ENCODE measurements at regions of chr19 and their contacts with region 1.

Region 1: DNA sequence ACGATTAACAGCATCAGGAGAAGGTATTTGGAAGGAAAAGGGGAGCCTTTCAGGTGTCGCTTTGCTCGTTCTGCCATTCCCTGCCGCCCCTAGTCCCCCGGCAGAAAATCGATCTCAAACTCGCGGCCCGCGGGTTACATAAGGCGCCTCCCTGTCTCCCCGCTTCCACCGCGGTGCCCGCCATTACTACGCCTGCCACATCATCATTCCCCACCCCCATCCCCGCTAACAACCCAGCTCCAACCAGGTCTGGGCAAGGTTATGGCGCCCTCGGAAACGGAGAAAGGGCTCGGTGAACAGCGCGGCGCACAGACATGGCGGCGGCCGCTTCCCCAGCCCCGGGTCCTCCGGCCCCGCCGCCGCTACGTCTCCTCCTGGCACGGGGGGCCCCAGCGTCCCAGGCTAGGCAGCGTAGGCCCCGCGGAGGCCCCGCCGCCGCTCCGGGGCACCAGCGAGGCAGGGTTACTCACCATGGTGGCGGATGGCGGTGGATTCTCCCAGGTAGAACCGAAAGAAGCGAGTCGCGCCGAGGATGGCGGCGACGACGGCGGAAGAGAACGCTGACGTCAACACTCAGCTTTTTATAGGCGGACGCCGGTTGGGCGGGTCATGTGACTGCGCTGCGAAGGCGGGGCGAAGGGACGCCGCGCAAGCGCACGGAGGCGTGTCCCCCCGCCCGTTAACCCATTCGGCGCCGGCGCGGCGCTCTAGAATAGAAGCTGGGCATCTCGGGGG is at the start of gene EEF2:
- DNase-seq: peak; percentile 91
- H3K4me3 ChIP-seq: peak within 1 kb of the TSS; percentile 98
- H3K27ac ChIP-seq: peak within 1 kb of the TSS; percentile 96
- H3K4me1 ChIP-seq: peaks cover 36% of the 10 kb centered on the region
- H3K27me3 ChIP-seq: no peaks in the 10 kb centered on the region
- CTCF ChIP-seq: no peak
- total RNA-seq, gene EEF2: 2,701 and 2,706 TPM in 2 replicates

Region 2: DNA sequence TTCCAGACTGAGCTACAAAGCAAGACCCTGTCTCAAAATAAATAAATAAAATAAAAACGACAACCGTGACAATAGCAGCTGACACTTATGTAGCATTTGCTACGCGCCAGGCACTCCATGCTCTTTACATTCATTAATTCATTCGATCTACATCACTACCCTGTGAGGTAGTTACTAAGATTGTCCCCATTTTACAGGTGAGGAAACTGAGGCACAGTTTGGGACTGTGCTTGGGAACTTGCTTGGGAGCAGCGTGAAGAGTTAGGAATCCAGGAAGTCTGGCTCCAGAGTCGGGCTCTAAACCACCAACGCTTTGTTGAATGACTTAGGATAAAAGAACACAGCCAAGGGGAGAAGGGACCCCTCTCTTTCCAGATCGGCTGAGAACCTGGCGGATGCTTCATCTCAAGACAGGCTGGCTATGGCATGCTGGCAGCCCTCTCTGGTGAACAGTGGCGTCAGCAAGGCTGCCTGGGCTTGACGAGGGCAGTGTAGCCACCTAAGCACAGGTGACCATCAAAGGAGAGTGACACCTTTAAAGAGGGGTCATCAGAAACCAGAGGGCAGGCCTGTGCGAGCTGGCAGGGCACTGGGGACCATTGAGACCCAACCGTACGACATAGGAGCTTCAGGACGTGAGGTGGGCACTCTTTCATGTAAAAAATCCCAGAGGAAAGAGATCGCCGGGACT is 485.2 kb before region 1 on chr19:
- CTCF ChIA-PET with region 1: no interaction called
- POLR2A ChIA-PET with region 1: interaction called, 37 read pairs
- intact Hi-C with region 1: no loop called
- DNase-seq: no peak
- H3K4me3 ChIP-seq: peak overlapping the region; percentile 81
- H3K27ac ChIP-seq: peak overlapping the region; percentile 100
- H3K4me1 ChIP-seq: peaks cover 3% of the 10 kb centered on the region
- H3K27me3 ChIP-seq: no peaks in the 10 kb centered on the region
- CTCF ChIP-seq: no peak

Region 3: GRCh38 chr19:3818466-3818865 is 166.6 kb before region 1 on chr19:
- CTCF ChIA-PET with region 1: interaction called, 16 read pairs
- POLR2A ChIA-PET with region 1: no interaction called
- intact Hi-C with region 1: no loop called
- DNase-seq: no peak
- H3K4me3 ChIP-seq: no peak overlapping the region
- H3K27ac ChIP-seq: no peak overlapping the region
- H3K4me1 ChIP-seq: no peaks in the 10 kb centered on the region
- H3K27me3 ChIP-seq: no peaks in the 10 kb centered on the region
- CTCF ChIP-seq: no peak

Region 4: DNA sequence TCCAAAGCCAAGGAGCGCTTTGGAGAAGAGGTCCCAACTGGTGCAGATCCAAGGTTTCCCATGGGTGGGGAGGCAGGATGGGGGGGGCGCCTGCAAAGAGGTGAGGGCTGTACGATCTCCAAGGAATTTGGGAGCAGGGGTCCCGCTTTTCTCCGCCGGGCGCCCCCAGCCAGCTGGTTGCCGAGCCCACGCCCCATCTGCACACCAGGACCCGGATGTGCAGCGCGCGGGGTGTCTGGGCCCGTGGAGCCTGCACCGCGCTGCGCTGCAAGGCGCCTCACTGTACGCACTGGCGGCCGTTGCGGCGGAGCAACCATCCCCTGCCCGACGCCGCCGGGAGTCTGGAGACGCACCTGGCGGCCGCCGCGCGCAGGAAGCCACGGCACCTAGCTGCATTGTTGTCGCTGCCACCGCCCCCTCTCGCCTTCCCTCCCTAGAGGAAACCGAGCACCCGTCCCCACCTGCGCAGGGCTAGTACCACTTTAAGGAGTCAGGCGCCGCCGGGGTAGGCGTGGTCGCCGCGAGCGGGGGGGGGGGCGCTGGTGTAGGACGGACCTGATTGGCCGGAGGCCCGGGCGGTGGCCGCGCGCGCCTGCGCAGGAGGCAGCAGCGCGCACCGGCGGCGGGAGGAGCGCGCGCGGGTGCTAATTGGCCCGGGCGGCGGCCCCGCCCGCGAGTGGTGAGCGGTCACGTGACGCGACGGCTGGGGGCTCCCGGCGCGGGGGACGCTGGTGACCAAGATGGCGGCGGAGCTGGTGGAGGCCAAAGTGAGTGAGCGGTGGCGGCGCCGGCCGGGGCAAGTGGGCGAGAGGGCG is 22.2 kb after region 1 on chr19 and contains the start of gene PIAS4:
- CTCF ChIA-PET with region 1: interaction called, 10 read pairs
- POLR2A ChIA-PET with region 1: interaction called, 5 read pairs
- intact Hi-C with region 1: no loop called
- DNase-seq: peak; percentile 98
- H3K4me3 ChIP-seq: peak within 1 kb of the TSS; percentile 66
- H3K27ac ChIP-seq: peak within 1 kb of the TSS; percentile 80
- H3K4me1 ChIP-seq: peaks cover 9% of the 10 kb centered on the region
- H3K27me3 ChIP-seq: no peaks in the 10 kb centered on the region
- CTCF ChIP-seq: no peak
- total RNA-seq, gene PIAS4: 48.1 and 59.1 TPM in 2 replicates

Region 5: DNA sequence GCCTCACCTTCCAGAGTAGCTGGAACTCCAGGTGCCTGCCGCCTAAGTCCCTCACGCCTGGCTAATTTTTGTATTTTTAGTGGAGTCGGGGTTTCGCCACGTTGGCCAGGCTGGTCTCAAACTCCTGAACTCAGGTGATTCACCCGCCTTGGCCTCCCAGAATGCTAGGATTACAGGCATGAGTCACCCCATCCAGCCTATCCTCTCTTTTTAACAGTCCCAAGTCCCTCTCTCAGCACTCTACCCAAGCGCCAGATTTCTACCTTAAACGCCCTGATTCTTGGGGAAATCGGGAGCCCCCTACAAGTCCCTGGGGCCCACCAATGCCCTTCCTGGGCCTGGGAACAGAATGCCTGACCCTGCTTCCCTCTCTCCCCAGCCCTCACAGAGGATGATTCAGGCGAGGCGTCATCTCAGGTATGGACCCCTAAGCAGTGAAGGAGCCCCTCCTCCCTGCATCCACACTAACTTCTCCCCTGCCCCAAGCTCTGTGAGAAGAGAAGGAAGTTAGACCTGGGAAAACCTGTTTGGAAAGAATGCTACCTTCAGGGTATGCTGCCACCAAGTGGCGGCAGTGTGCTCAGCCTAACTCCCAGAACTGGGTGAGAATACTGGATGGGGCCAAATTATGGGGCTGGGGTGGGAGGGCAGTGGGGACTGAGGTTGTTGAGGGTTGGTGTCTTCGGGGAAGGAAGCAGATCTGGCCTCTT is 223.5 kb after region 1 on chr19:
- CTCF ChIA-PET with region 1: interaction called, 8 read pairs
- POLR2A ChIA-PET with region 1: no interaction called
- intact Hi-C with region 1: loop called (anchors 1 kb)
- DNase-seq: peak; percentile 68
- H3K4me3 ChIP-seq: no peak overlapping the region
- H3K27ac ChIP-seq: no peak overlapping the region
- H3K4me1 ChIP-seq: no peaks in the 10 kb centered on the region
- H3K27me3 ChIP-seq: peaks cover 3% of the 10 kb centered on the region
- CTCF ChIP-seq: peak; percentile 63

Measured in A673 (cell line).